HepG2 (cell line): ENCODE measurements at regions of chr2 and their contacts with region 1.

Region 1: GRCh38 chr2:137467246-137467862 is 496.9 kb upstream of the HNMT start:
- DNase-seq: peak; percentile 23
- ATAC-seq: peak; percentile 98
- H3K4me3 ChIP-seq: no peak overlapping the region
- H3K27ac ChIP-seq: no peak overlapping the region
- H3K4me1 ChIP-seq: no peaks in the 10 kb centered on the region
- H3K27me3 ChIP-seq: no peaks in the 10 kb centered on the region
- CTCF ChIP-seq: peak; percentile 75
- EP300 ChIP-seq: no peak
- POLR2A ChIP-seq: no peak
- RAD21 ChIP-seq: peak; percentile 37; the same call in 1 of the 2 replicates

Region 2: DNA sequence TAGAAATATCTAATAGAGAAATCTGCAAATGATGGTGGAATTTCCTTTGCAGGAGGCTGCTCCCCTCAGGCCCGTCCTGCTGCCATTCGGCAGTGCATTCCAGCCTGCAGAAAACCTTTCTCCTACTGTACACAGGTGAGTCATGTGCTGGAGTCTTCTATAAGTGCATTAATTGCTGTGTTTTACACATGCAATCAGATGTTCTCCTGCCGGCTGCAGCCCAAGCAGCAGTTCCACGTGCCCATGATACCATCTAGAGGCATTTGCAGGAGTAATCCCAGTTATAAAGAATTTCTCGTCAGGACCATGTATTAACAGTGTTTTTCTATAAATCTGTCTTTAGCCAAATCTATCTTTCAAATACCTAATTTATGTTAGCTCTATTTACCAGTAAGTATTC is 192.3 kb after region 1 on chr2:
- CTCF ChIA-PET with region 1: no interaction called
- POLR2A ChIA-PET with region 1: no interaction called
- in situ Hi-C with region 1: no loop called
- intact Hi-C with region 1: loop called (anchors 1 kb)
- DNase-seq: peak; percentile 12
- ATAC-seq: peak; percentile 56
- H3K4me3 ChIP-seq: no peak overlapping the region
- H3K27ac ChIP-seq: no peak overlapping the region
- H3K4me1 ChIP-seq: no peaks in the 10 kb centered on the region
- H3K27me3 ChIP-seq: no peaks in the 10 kb centered on the region
- CTCF ChIP-seq: peak; percentile 44
- EP300 ChIP-seq: no peak
- POLR2A ChIP-seq: no peak
- RAD21 ChIP-seq: no peak

Region 3: DNA sequence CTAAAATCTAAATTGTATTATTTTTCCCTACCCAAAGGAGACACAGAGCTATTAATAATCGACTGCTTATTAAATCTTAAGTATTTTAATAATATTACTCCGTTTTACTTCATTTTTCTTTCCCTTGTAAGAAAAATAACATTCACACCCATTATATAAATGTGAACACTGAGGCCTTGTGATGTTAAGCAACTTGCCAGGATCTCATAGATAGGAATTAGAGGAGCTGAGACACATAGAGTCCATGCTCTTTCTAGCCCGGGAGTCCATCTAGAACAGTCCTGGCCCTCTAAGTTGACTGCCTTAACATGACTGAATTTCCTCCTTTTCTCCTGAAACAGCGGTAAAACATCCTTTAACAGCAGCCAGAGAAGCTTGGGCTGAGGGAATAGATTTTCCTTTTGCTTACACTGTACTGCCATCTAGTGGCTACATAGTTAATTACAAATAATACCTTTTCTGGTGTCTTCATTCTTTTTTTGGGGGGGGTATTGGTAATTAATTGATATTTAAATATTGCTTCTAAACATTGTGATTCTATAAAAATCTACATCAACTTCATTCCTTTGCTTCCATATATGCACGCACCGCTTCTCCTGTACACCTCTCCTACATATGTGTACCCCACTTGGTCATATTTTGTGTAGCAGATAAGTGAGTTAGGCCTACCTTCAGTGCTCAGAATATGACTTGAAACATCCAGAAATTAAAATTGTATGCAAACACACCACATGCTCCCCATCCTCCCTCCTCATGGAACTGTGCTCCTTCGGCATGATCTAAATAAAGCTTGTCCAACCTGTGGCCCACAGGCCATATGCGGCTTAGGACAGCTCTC is 371.1 kb after region 1 on chr2:
- CTCF ChIA-PET with region 1: interaction called, 33 read pairs
- POLR2A ChIA-PET with region 1: no interaction called
- in situ Hi-C with region 1: loop called (anchors 5 kb)
- intact Hi-C with region 1: loop called (anchors 1 kb)
- DNase-seq: peak; percentile 58
- ATAC-seq: peak; percentile 86
- H3K4me3 ChIP-seq: no peak overlapping the region
- H3K27ac ChIP-seq: no peak overlapping the region
- H3K4me1 ChIP-seq: no peaks in the 10 kb centered on the region
- H3K27me3 ChIP-seq: no peaks in the 10 kb centered on the region; a peak in 1 of 5 replicates
- CTCF ChIP-seq: peak; percentile 86
- EP300 ChIP-seq: no peak
- POLR2A ChIP-seq: no peak
- RAD21 ChIP-seq: peak; percentile 86